MCF 10A (cell line): ENCODE measurements at regions of chr20 and their contacts with region 1.

Region 1: GRCh38 chr20:3679749-3680700 is 1.8 kb downstream of the ADAM33 start:
- DNase-seq: no peak
- H3K4me3 Mint-ChIP-seq: no peak overlapping the region
- H3K27ac Mint-ChIP-seq: no peak overlapping the region
- H3K4me1 Mint-ChIP-seq: no peaks in the 10 kb centered on the region
- H3K27me3 Mint-ChIP-seq: peaks cover 19% of the 10 kb centered on the region
- CTCF ChIP-seq: no peak

Region 2: GRCh38 chr20:3374296-3374695 is 305.7 kb before region 1 on chr20:
- CTCF ChIA-PET with region 1: no interaction called
- POLR2A ChIA-PET with region 1: no interaction called
- intact Hi-C with region 1: no loop called
- DNase-seq: no peak
- H3K4me3 Mint-ChIP-seq: no peak overlapping the region
- H3K27ac Mint-ChIP-seq: no peak overlapping the region
- H3K4me1 Mint-ChIP-seq: no peaks in the 10 kb centered on the region
- H3K27me3 Mint-ChIP-seq: no peaks in the 10 kb centered on the region
- CTCF ChIP-seq: no peak

Region 3: DNA sequence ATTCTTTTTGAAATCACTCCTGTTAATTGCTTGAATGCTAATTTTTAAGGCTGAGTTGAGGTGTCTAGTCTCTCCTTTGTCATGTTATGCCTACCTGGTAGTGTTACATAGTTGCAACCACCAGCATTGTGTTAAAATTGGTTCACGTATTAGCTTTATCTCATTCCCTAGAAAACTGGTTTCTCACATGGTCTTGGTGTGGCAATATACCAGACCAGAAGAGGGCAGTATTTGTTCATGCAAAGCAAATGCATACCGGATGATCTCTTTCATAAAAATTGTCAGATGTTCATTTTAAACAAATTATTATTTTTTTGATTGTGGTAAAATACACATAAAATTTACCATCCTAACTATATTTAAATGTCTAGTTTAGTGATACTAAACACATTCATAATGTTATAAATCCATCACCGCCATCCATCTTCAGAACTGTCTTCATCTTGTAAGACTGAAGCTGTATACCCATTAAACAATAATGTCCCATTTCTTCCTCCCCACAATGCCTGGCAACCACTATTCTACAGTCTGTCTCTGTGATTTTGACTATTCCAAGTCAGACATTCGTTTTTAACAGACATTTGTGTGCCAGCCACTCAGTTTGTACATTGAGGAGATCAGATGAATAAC is 116.4 kb before region 1 on chr20:
- CTCF ChIA-PET with region 1: no interaction called
- POLR2A ChIA-PET with region 1: no interaction called
- intact Hi-C with region 1: loop called (anchors 10 kb)
- DNase-seq: peak; percentile 52
- H3K4me3 Mint-ChIP-seq: no peak overlapping the region
- H3K27ac Mint-ChIP-seq: no peak overlapping the region
- H3K4me1 Mint-ChIP-seq: no peaks in the 10 kb centered on the region
- H3K27me3 Mint-ChIP-seq: no peaks in the 10 kb centered on the region
- CTCF ChIP-seq: peak; percentile 60

Region 4: GRCh38 chr20:3640259-3640658 is 39.8 kb before region 1 on chr20:
- CTCF ChIA-PET with region 1: no interaction called
- POLR2A ChIA-PET with region 1: no interaction called
- intact Hi-C with region 1: no loop called
- DNase-seq: no peak
- H3K4me3 Mint-ChIP-seq: no peak overlapping the region
- H3K27ac Mint-ChIP-seq: no peak overlapping the region
- H3K4me1 Mint-ChIP-seq: no peaks in the 10 kb centered on the region
- H3K27me3 Mint-ChIP-seq: no peaks in the 10 kb centered on the region
- CTCF ChIP-seq: no peak

Region 5: DNA sequence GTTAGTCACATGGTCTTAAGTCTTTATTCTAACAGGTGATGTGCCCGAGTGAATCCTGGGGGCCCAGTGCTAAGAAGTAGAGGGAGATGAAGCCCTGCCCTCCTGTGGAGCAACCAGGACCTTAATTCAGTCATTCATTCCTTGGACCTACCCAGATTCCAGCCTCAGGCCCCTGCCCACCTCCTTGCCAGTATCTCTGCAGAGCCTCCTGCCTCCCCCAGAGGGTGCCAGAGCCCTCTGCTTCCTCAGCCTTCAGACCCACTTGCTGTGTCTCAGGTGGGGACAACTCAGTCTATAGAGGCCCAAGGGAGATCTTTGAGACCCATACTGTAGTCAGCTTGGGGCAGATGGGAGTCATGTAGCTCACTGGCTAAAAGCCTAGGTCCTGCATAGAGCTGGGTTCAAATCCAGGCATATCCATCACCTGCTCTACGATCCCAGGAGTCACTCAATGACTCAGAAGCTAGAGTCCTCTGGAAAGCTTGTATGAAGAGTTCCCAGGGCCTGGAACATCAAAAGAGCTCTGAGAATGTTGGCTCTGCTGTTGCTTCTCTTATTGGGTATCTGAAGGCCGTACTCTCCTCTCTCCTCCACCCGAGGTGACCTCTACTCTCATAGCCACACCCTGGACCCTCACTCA is 36.3 kb after region 1 on chr20:
- CTCF ChIA-PET with region 1: interaction called, 154 read pairs
- POLR2A ChIA-PET with region 1: interaction called, 11 read pairs
- intact Hi-C with region 1: loop called (anchors 1 kb)
- DNase-seq: peak; percentile 59
- H3K4me3 Mint-ChIP-seq: no peak overlapping the region
- H3K27ac Mint-ChIP-seq: no peak overlapping the region
- H3K4me1 Mint-ChIP-seq: no peaks in the 10 kb centered on the region
- H3K27me3 Mint-ChIP-seq: peaks cover 18% of the 10 kb centered on the region
- CTCF ChIP-seq: peak; percentile 67

Region 6: DNA sequence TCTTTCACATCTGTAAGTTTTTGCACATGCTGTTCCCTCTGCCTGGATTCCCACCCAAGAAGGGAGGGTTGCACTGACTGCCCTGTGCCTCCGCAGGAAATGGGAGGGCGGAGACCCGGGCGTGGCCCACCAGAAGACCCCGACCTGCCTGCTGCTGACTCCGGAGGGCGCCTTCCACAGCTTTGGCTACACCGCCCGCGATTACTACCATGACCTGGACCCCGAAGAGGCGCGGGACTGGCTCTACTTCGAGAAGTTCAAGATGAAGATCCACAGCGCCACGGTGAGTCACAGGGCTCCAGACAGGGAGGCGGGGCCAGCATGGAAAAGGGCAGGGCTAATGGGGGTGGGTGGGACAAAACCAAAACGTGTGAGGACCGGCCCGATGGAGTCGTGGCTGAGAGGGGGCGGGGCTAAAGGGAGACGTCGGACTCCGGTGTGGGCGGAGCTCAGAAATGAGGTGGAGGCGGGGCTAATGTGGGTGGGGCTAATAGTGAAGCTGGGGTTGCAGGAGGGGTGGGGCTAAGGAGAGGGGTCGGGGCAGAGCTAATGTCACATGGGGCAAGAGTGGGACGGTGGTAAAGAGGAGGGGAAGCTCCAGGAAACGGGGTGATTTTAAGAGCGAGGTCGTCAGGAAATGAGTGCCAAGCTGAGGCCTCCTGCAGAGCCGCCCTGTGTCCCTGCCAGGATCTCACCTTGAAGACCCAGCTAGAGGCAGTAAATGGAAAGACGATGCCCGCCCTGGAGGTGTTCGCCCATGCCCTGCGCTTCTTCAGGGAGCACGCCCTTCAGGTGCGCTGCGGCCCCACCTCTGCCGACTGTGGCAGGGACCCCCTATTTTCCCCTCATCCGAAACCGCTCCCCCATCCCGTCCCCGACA is 65.0 kb after region 1 on chr20:
- CTCF ChIA-PET with region 1: interaction called, 11 read pairs
- POLR2A ChIA-PET with region 1: no interaction called
- intact Hi-C with region 1: no loop called
- DNase-seq: peak; percentile 88
- H3K4me3 Mint-ChIP-seq: peak overlapping the region; percentile 60
- H3K27ac Mint-ChIP-seq: no peak overlapping the region
- H3K4me1 Mint-ChIP-seq: no peaks in the 10 kb centered on the region
- H3K27me3 Mint-ChIP-seq: peaks cover 11% of the 10 kb centered on the region
- CTCF ChIP-seq: no peak

Region 7: GRCh38 chr20:3767427-3768341 is 87.7 kb after region 1 on chr20 and contains the start of gene ADISSP:
- CTCF ChIA-PET with region 1: interaction called, 31 read pairs
- POLR2A ChIA-PET with region 1: interaction called, 13 read pairs
- intact Hi-C with region 1: loop called (anchors 1 kb)
- DNase-seq: peak; percentile 98
- H3K4me3 Mint-ChIP-seq: peak within 1 kb of the TSS; percentile 84
- H3K27ac Mint-ChIP-seq: peak within 1 kb of the TSS; percentile 91
- H3K4me1 Mint-ChIP-seq: peaks cover 18% of the 10 kb centered on the region
- H3K27me3 Mint-ChIP-seq: no peaks in the 10 kb centered on the region
- CTCF ChIP-seq: no peak
- total RNA-seq, gene ADISSP: 37.8 and 58.8 TPM in 2 replicates

Region 8: DNA sequence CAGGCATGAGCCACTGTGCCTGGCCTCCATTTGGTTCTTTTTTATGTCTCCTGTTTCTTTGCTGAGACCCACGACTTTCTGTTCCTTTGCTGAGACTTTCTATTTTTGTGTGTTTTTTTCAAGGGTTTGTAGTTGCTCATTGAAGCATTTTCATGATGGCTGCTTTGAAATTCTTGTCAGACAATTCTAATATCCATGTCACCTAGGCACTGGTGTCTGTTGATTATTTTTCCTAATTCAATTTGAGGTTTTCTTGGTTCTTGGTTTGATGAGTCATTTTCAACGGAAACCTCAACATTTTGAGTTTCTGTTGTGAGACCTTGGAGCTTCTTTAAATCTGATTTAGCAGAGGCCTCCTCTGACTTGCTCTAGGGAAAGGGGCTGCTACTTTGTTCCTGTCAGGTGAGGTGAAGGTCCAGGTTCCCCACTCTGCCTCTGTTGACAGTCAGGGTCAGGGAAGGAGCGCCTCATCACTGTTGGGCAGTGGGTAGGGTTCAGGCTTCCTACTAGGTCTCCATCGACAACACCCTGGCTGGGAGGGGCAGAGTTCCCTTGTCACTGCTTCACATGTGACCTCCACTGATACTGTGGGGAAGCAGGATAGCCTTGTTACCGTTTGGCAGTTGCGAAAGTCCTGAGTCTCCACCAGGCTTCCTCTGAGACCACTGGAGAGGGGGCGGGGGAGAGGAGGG is 402.5 kb after region 1 on chr20:
- CTCF ChIA-PET with region 1: no interaction called
- POLR2A ChIA-PET with region 1: no interaction called
- intact Hi-C with region 1: loop called (anchors 1 kb)
- DNase-seq: no peak
- H3K4me3 Mint-ChIP-seq: no peak overlapping the region
- H3K27ac Mint-ChIP-seq: no peak overlapping the region
- H3K4me1 Mint-ChIP-seq: peaks cover 22% of the 10 kb centered on the region
- H3K27me3 Mint-ChIP-seq: no peaks in the 10 kb centered on the region
- CTCF ChIP-seq: no peak